Activated CD4-positive, alpha-beta memory T cell treated with anti-CD3 and anti-CD28 coated beads for 36 hours (primary cell): ENCODE measurements at regions of chr17 and their contacts with region 1.

Region 1: GRCh38 chr17:41885733-41886132 is 20.5 kb upstream of the KLHL11 start:
- DNase-seq: peak; percentile 12
- H3K4me3 Mint-ChIP-seq: no peak overlapping the region
- H3K27ac Mint-ChIP-seq: no peak overlapping the region
- H3K4me1 Mint-ChIP-seq: no peaks in the 10 kb centered on the region
- H3K27me3 Mint-ChIP-seq: no peaks in the 10 kb centered on the region

Region 2: DNA sequence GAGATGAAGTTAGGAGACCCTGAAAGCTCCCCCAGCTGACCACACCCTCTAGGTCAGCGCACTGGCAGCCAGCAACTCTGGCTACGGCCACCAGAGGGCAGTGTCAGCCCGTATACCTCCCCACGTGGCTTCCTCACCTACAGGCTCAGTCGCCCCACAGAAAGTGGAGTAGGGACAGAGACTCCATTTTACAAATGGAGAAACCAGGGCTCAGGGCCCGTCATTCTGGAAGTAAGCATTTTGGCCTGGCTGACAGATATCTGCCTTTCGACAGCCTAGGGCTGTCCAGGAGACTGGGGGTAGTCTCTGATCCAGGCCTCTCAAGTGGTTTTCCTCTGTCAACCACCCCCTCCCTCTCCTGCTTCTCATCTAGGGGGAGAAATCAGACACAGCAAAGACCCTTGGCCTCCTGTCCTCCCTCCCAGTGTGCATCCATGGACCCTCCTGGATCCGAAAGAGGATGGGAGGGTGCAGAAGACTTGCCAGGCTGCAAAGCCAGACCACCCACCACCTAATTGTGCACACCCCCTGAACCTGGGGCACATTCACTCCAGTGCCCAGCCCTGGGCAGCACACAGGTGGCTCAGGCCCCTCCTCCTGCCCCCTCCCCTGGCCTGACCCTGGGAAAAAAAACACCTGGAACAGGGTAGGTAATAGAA is 147.5 kb before region 1 on chr17:
- CTCF ChIA-PET with region 1: interaction called, 3 read pairs
- POLR2A ChIA-PET with region 1: no interaction called
- intact Hi-C with region 1: loop called (anchors 5 kb)
- DNase-seq: peak; percentile 89
- H3K4me3 Mint-ChIP-seq: no peak overlapping the region
- H3K27ac Mint-ChIP-seq: no peak overlapping the region
- H3K4me1 Mint-ChIP-seq: peaks cover 5% of the 10 kb centered on the region
- H3K27me3 Mint-ChIP-seq: peaks cover 28% of the 10 kb centered on the region